Naive thymus-derived CD4-positive, alpha-beta T cell (primary cell): ENCODE measurements at regions of chr7 and their contacts with region 1.

Region 1: GRCh38 chr7:50266635-50267386 is 37.7 kb upstream of the IKZF1 start:
- DNase-seq: peak in 8 of 9 donors; percentile 79 to 86 (median 82)
- ATAC-seq: peak; percentile 87
- H3K4me3 ChIP-seq: peak overlapping the region; percentile 14
- H3K4me3 Mint-ChIP-seq: peak overlapping the region; percentile 69 to 99 (median 82)
- H3K27ac ChIP-seq: peak overlapping the region; percentile 66
- H3K27ac Mint-ChIP-seq: peak overlapping the region; percentile 87 to 99 (median 95)
- H3K4me1 ChIP-seq: peaks cover 87 to 98% of the 10 kb centered on the region in 2 donors
- H3K4me1 Mint-ChIP-seq: peaks cover 83 to 100% (median 98%) of the 10 kb centered on the region in 7 donors
- H3K27me3 ChIP-seq: no peaks in the 10 kb centered on the region
- H3K27me3 Mint-ChIP-seq: no peaks in the 10 kb centered on the region

Region 2: GRCh38 chr7:49927631-49928030 is 339.2 kb before region 1 on chr7:
- CTCF ChIA-PET with region 1: no interaction called
- POLR2A ChIA-PET with region 1: no interaction called
- intact Hi-C with region 1: no loop called
- DNase-seq: no peak
- ATAC-seq: no peak
- H3K4me3 ChIP-seq: no peak overlapping the region
- H3K4me3 Mint-ChIP-seq: no peak overlapping the region
- H3K27ac ChIP-seq: no peak overlapping the region
- H3K27ac Mint-ChIP-seq: no peak overlapping the region
- H3K4me1 ChIP-seq: no peaks in the 10 kb centered on the region
- H3K4me1 Mint-ChIP-seq: no peaks in the 10 kb centered on the region
- H3K27me3 ChIP-seq: no peaks in the 10 kb centered on the region
- H3K27me3 Mint-ChIP-seq: peaks cover 0 to 20% (median 0%) of the 10 kb centered on the region in 5 donors

Region 3: GRCh38 chr7:50142425-50143017 is 124.3 kb before region 1 on chr7:
- CTCF ChIA-PET with region 1: interaction called, 3 read pairs
- POLR2A ChIA-PET with region 1: no interaction called
- intact Hi-C with region 1: loop called in 1 of 2 experiments (anchors 1 kb)
- DNase-seq: peak in 7 of 9 donors; percentile 43 to 72 (median 62)
- ATAC-seq: peak; percentile 83
- H3K4me3 ChIP-seq: no peak overlapping the region
- H3K4me3 Mint-ChIP-seq: peak overlapping the region in 9 of 10 donors; percentile 13 to 86 (median 64)
- H3K27ac ChIP-seq: peak overlapping the region; percentile 55
- H3K27ac Mint-ChIP-seq: peak overlapping the region in 8 of 9 donors; percentile 16 to 91 (median 62)
- H3K4me1 ChIP-seq: peaks cover 3% of the 10 kb centered on the region in 2 donors
- H3K4me1 Mint-ChIP-seq: peaks cover 0 to 37% (median 12%) of the 10 kb centered on the region in 7 donors
- H3K27me3 ChIP-seq: no peaks in the 10 kb centered on the region
- H3K27me3 Mint-ChIP-seq: peaks cover 0 to 18% (median 0%) of the 10 kb centered on the region in 5 donors

Region 4: GRCh38 chr7:50212666-50213621 is 53.9 kb before region 1 on chr7:
- CTCF ChIA-PET with region 1: interaction called, 4 read pairs
- POLR2A ChIA-PET with region 1: interaction called, 101 read pairs
- intact Hi-C with region 1: no loop called
- DNase-seq: peak in 5 of 9 donors; percentile 24 to 49 (median 41)
- ATAC-seq: peak; percentile 63
- H3K4me3 ChIP-seq: no peak overlapping the region
- H3K4me3 Mint-ChIP-seq: peak overlapping the region; percentile 44 to 89 (median 68)
- H3K27ac ChIP-seq: no peak overlapping the region
- H3K27ac Mint-ChIP-seq: peak overlapping the region; percentile 26 to 94 (median 83)
- H3K4me1 ChIP-seq: peaks cover 17 to 86% of the 10 kb centered on the region in 2 donors
- H3K4me1 Mint-ChIP-seq: peaks cover 69 to 100% (median 98%) of the 10 kb centered on the region in 7 donors
- H3K27me3 ChIP-seq: no peaks in the 10 kb centered on the region
- H3K27me3 Mint-ChIP-seq: no peaks in the 10 kb centered on the region

Region 5: GRCh38 chr7:50251765-50252164 is 15.0 kb before region 1 on chr7:
- CTCF ChIA-PET with region 1: interaction called, 5 read pairs
- POLR2A ChIA-PET with region 1: interaction called, 21 read pairs
- intact Hi-C with region 1: loop called in 1 of 2 experiments (anchors 1 kb)
- DNase-seq: no peak
- ATAC-seq: no peak
- H3K4me3 ChIP-seq: no peak overlapping the region
- H3K4me3 Mint-ChIP-seq: no peak overlapping the region
- H3K27ac ChIP-seq: no peak overlapping the region
- H3K27ac Mint-ChIP-seq: peak overlapping the region in 5 of 9 donors; percentile 4 to 60 (median 32)
- H3K4me1 ChIP-seq: no peaks in the 10 kb centered on the region
- H3K4me1 Mint-ChIP-seq: peaks cover 5 to 59% (median 42%) of the 10 kb centered on the region in 7 donors
- H3K27me3 ChIP-seq: no peaks in the 10 kb centered on the region
- H3K27me3 Mint-ChIP-seq: no peaks in the 10 kb centered on the region

Region 6: DNA sequence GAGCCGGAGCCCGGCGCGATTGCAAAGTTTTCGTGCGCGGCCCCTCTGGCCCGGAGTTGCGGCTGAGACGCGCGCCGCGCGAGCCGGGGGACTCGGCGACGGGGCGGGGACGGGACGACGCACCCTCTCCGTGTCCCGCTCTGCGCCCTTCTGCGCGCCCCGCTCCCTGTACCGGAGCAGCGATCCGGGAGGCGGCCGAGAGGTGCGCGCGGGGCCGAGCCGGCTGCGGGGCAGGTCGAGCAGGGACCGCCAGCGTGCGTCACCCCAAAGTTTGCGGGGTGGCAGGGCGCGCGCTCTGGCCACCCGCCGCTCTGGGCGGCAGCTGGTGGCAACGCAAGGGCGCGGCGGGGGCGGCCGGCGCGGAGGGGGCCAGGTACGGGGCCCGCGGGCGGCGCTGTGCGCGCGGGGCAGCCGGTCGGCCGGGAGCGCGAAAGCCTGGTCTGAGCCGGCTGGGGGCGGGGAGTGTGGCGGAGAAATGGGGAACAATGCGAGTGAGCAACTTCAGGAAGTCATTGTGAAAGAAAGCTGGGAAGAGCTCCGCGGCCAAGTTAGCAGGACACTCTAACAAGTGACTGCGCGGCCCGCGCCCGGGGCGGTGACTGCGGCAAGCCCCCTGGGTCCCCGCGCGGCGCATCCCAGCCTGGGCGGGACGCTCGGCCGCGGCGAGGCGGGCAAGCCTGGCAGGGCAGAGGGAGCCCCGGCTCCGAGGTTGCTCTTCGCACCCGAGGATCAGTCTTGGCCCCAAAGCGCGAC is 37.5 kb after region 1 on chr7 and contains the start of gene IKZF1:
- CTCF ChIA-PET with region 1: interaction called, 7 read pairs
- POLR2A ChIA-PET with region 1: interaction called, 1,000 read pairs
- intact Hi-C with region 1: loop called (anchors 1 kb)
- DNase-seq: peak; percentile 38 to 75 (median 58)
- ATAC-seq: peak; percentile 54
- H3K4me3 ChIP-seq: peak within 1 kb of the TSS; percentile 84
- H3K4me3 Mint-ChIP-seq: peak within 1 kb of the TSS; percentile 93 to 100 (median 99)
- H3K27ac ChIP-seq: peak within 1 kb of the TSS; percentile 90
- H3K27ac Mint-ChIP-seq: peak within 1 kb of the TSS; percentile 91 to 100 (median 98)
- H3K4me1 ChIP-seq: peaks cover 13 to 33% of the 10 kb centered on the region in 2 donors
- H3K4me1 Mint-ChIP-seq: peaks cover 37 to 57% (median 53%) of the 10 kb centered on the region in 7 donors
- H3K27me3 ChIP-seq: no peaks in the 10 kb centered on the region
- H3K27me3 Mint-ChIP-seq: peaks cover 0 to 2% (median 0%) of the 10 kb centered on the region in 5 donors
- total RNA-seq, gene IKZF1: 388 to 548 (median 463) TPM

Region 7: GRCh38 chr7:50342616-50343114 is 75.9 kb after region 1 on chr7:
- CTCF ChIA-PET with region 1: no interaction called
- POLR2A ChIA-PET with region 1: interaction called, 15 read pairs
- intact Hi-C with region 1: loop called in 1 of 2 experiments (anchors 2 kb)
- DNase-seq: peak in 6 of 9 donors; percentile 46 to 67 (median 54)
- ATAC-seq: peak; percentile 46
- H3K4me3 ChIP-seq: peak overlapping the region; percentile 22
- H3K4me3 Mint-ChIP-seq: peak overlapping the region in 8 of 10 donors; percentile 77 to 89 (median 84)
- H3K27ac ChIP-seq: peak overlapping the region; percentile 93
- H3K27ac Mint-ChIP-seq: peak overlapping the region in 3 of 9 donors; percentile 90 to 99 (median 97)
- H3K4me1 ChIP-seq: peaks cover 94% of the 10 kb centered on the region in 2 donors
- H3K4me1 Mint-ChIP-seq: peaks cover 0 to 93% (median 65%) of the 10 kb centered on the region in 7 donors
- H3K27me3 ChIP-seq: no peaks in the 10 kb centered on the region
- H3K27me3 Mint-ChIP-seq: no peaks in the 10 kb centered on the region

Region 8: DNA sequence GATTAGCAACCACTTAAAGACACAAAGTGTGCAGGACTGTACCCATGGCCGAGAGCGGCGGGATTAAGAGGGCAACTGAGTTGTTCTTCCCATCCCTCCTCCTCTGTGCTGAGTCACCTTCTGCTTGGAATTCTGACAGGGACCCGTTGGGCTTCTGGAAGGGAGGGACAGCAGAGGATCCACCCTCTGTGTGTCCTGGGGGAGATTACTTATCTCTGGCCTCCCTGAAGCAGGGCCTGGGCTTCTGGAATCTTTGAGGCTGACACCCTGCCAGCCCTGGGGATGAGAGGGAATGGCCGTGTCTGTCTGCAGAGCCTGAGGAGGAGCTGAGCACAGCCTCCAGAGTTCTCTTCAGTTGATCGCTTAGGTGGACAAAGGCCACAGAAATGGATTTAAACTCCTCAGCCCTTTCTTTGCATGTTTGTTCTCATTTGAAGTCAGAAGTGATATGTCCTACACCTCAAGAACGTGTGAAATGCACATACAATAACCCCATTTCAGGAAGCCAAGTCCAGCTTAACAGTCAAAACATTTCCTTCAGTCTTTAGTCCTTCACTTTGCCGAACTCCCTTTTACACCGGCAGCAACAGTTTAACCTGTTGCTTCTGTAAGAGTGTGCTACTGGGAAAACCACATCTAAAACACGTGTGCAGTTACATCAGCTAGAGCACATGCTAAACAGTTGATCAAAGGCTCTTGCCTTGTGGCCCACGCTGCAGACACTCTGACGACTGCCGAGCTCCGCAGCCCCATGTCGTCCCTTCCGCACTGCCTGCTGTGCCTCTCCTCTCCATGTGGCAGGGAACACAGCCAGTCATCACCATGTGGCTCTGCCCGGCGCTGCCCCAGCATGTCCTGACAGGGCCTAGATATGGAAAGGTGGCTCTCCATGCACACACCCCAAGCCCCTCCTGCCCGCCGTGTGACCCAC is 93.4 kb after region 1 on chr7:
- CTCF ChIA-PET with region 1: no interaction called
- POLR2A ChIA-PET with region 1: interaction called, 49 read pairs
- intact Hi-C with region 1: loop called in 1 of 2 experiments (anchors 2 kb)
- DNase-seq: peak; percentile 58 to 93 (median 88)
- ATAC-seq: peak; percentile 92
- H3K4me3 ChIP-seq: peak overlapping the region; percentile 5
- H3K4me3 Mint-ChIP-seq: peak overlapping the region; percentile 73 to 89 (median 78)
- H3K27ac ChIP-seq: peak overlapping the region; percentile 94
- H3K27ac Mint-ChIP-seq: peak overlapping the region in 6 of 9 donors; percentile 91 to 100 (median 100)
- H3K4me1 ChIP-seq: peaks cover 95 to 98% of the 10 kb centered on the region in 2 donors
- H3K4me1 Mint-ChIP-seq: peaks cover 86 to 100% (median 97%) of the 10 kb centered on the region in 7 donors
- H3K27me3 ChIP-seq: no peaks in the 10 kb centered on the region
- H3K27me3 Mint-ChIP-seq: no peaks in the 10 kb centered on the region